Testis (tissue), 5 donors: ENCODE measurements at regions of chr1 and their contacts with region 1.

Region 1: DNA sequence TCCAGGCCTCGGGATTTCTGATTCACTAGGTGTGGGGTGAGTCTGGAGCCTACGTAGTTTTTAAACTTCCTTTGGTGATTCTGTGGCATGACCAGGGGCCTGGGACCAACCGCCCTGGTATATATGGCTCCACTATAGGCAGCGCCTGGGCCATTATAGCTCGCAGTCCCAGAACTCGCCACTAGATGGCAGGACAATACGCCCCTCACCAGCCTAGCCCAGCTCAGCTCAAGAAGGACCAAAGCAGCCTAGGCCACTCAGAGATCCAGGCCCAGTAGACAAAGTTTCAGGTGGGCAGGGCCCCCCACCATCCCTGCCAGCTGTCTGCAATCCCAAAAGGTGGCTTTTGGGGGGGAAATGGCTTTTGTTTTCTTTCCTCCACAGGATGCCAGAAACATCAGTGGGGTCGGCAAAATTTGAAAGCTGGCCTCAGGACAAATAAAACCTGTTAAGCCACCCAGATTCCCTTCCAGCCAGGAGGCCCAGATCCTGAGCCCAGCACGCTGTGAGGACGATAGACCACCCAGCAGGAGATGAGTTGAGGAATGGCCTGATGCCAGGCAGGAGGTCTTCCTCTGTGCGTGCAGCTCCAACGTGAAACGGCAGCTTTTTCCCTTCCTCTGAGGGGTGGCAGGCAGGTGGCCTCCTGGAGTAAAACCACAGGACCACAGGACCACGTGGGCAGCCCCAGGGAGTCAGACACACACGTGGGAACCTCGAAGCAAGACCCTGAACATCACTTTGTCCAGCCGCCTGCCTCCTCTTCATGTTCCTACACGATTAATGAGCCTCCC is 24.8 kb upstream of the TMEM51 start:
- DNase-seq: peak; percentile 84
- H3K4me3 ChIP-seq: no peak overlapping the region
- H3K27ac ChIP-seq: no peak overlapping the region
- H3K4me1 ChIP-seq: no peaks in the 10 kb centered on the region
- H3K27me3 ChIP-seq: no peaks in the 10 kb centered on the region
- CTCF ChIP-seq: peak; percentile 82 to 87 (median 87)
- POLR2A ChIP-seq: no peak

Region 2: GRCh38 chr1:15304701-15305467 is 176.2 kb after region 1 on chr1:
- intact Hi-C with region 1: loop called (anchors 10 kb)
- DNase-seq: peak; percentile 77
- H3K4me3 ChIP-seq: no peak overlapping the region
- H3K27ac ChIP-seq: no peak overlapping the region
- H3K4me1 ChIP-seq: no peaks in the 10 kb centered on the region
- H3K27me3 ChIP-seq: no peaks in the 10 kb centered on the region
- CTCF ChIP-seq: peak; percentile 80 to 94 (median 81)
- POLR2A ChIP-seq: no peak